Caco-2 (cell line): ENCODE measurements at regions of chr11 and their contacts with region 1.

Region 1: DNA sequence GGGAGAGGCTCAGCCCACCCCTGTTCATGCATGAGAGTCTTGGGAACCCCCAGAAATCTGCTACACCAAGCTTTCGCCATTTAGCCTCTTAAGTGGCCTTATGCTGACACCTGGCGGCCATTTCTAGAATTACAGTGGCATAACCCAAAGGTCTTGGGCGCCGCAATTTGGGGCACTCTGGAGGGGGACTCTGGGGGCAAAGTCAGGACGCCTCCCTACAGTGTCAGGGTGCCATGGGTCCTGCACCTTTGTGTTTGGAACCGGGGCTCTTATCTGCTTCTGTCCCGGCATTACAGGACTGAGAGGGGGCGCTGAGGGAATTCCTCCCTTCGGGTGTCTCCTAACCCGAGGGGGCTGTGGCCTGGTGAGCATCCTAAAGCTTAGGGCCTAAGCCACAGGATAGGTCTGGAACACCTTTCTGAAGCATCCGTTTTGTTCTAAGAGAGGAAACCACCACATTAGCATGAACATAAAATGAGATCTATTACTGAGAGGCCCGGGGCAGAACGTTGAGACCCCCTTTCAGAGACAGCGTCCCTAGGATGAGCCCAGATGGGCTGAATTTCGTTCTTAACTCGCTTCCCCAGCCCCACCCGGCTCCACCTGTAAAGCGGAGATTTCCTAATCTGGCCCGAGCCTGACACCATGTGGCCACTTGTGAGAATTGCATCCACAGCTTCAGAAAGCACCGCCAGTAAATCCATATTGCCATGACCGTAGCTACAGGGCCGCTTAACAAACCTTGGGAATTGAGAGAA is 9.3 kb downstream of the INS start:
- DNase-seq: peak; percentile 90 to 92
- H3K4me3 ChIP-seq: no peak overlapping the region
- H3K4me3 Mint-ChIP-seq: peak overlapping the region; percentile 33
- H3K27ac Mint-ChIP-seq: peak overlapping the region; percentile 65
- H3K4me1 ChIP-seq: no peaks in the 10 kb centered on the region; the same call in 1 of the 2 replicates
- H3K4me1 Mint-ChIP-seq: no peaks in the 10 kb centered on the region
- H3K27me3 ChIP-seq: no peaks in the 10 kb centered on the region
- H3K27me3 Mint-ChIP-seq: no peaks in the 10 kb centered on the region
- CTCF ChIP-seq: peak; percentile 93 to 97

Region 2: GRCh38 chr11:1598816-1599215 is 552.9 kb before region 1 on chr11:
- CTCF ChIA-PET with region 1: interaction called, 13 read pairs
- POLR2A ChIA-PET with region 1: no interaction called
- intact Hi-C with region 1: no loop called
- DNase-seq: no peak
- H3K4me3 ChIP-seq: no peak overlapping the region
- H3K4me3 Mint-ChIP-seq: no peak overlapping the region
- H3K27ac Mint-ChIP-seq: no peak overlapping the region
- H3K4me1 ChIP-seq: no peaks in the 10 kb centered on the region
- H3K4me1 Mint-ChIP-seq: no peaks in the 10 kb centered on the region
- H3K27me3 ChIP-seq: no peaks in the 10 kb centered on the region; the same call in 1 of the 2 replicates
- H3K27me3 Mint-ChIP-seq: peaks cover 22% of the 10 kb centered on the region
- CTCF ChIP-seq: no peak

Region 3: DNA sequence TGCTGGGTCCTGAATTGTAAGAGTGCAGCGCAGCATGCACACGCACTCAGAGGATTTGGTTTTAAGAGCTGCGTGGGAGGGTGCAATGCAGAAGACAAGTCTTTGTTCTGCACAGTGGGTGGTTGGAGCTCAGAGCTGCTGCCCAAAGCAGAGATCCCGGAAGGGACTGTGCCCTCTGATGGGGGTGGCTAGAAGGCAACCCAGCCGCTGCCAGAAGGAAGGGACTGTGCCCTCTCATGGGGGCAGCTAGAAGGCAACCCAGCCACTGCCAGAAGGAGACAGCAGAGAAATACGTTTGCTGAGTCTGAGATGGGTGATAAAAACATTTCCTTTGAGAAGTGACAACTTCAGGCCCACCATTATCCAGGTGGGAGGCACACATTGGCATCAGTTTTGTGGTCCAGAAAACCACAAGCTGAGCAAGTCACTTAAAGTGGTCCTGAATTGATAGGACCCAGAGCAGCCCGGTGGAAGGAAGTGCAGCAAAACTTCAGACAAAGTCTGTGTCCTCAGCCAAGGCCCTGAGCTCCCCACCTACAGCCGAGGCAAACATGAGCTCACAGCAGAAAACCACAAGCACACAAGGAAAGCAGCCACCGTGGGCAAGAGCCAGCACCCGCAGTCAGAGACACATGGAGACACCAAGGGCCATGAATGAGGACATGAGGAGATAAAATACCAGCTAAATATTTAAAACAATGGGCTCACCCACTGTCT is 450.4 kb before region 1 on chr11:
- CTCF ChIA-PET with region 1: no interaction called
- POLR2A ChIA-PET with region 1: no interaction called
- intact Hi-C with region 1: no loop called
- DNase-seq: no peak
- H3K4me3 ChIP-seq: no peak overlapping the region
- H3K4me3 Mint-ChIP-seq: no peak overlapping the region
- H3K27ac Mint-ChIP-seq: no peak overlapping the region
- H3K4me1 ChIP-seq: peaks cover 9% of the 10 kb centered on the region; the same call in 1 of the 2 replicates
- H3K4me1 Mint-ChIP-seq: peaks cover 15% of the 10 kb centered on the region
- H3K27me3 ChIP-seq: no peaks in the 10 kb centered on the region
- H3K27me3 Mint-ChIP-seq: no peaks in the 10 kb centered on the region
- CTCF ChIP-seq: no peak

Region 4: GRCh38 chr11:1757861-1758610 is 393.6 kb before region 1 on chr11:
- CTCF ChIA-PET with region 1: no interaction called
- POLR2A ChIA-PET with region 1: no interaction called
- intact Hi-C with region 1: no loop called
- DNase-seq: no peak
- H3K4me3 ChIP-seq: no peak overlapping the region
- H3K4me3 Mint-ChIP-seq: no peak overlapping the region
- H3K27ac Mint-ChIP-seq: no peak overlapping the region
- H3K4me1 ChIP-seq: peaks cover 7% of the 10 kb centered on the region
- H3K4me1 Mint-ChIP-seq: peaks cover 7% of the 10 kb centered on the region
- H3K27me3 ChIP-seq: no peaks in the 10 kb centered on the region
- H3K27me3 Mint-ChIP-seq: no peaks in the 10 kb centered on the region
- CTCF ChIP-seq: no peak

Region 5: DNA sequence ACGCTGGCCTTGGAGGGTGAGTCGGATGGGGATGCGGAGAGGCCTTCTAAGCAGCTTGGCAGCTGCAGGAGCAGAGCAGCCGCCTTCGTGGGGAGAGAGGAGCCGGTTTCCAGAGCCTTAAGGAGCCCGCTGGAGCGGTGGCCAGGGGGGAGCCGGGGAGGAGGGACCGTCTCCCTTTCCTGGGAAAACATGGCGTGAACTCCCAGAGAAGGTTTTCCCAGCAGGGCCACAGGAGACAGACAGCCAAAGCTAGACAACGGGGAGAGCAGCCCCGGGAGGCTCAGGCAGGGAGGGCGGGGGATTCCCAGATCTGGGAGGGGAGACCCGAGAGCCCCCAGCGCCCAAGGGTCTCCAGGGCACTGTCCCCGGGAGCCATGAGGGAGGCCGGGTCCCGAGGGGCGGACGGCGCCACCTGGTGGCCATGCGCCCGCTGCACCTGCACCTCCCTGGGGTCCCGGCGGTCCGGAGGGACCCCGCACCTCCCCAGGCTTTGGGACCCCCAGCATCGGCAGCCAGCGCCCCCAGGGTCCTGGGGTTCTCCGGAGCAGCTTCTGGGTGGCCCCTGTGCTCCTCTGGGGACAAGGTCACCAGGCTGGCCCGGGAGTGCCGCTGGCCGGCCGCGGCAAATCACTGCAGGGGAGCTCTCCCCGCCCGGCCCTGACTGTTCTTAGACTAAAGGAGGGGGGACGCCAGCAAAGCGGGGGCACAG is 319.3 kb before region 1 on chr11:
- CTCF ChIA-PET with region 1: interaction called, 38 read pairs
- POLR2A ChIA-PET with region 1: no interaction called
- intact Hi-C with region 1: loop called (anchors 2 kb)
- DNase-seq: peak in 1 of 2 experiments; percentile 70
- H3K4me3 ChIP-seq: no peak overlapping the region
- H3K4me3 Mint-ChIP-seq: peak overlapping the region; percentile 33
- H3K27ac Mint-ChIP-seq: peak overlapping the region; percentile 98
- H3K4me1 ChIP-seq: peaks cover 78% of the 10 kb centered on the region
- H3K4me1 Mint-ChIP-seq: peaks cover 50% of the 10 kb centered on the region
- H3K27me3 ChIP-seq: no peaks in the 10 kb centered on the region
- H3K27me3 Mint-ChIP-seq: no peaks in the 10 kb centered on the region
- CTCF ChIP-seq: peak; percentile 80 to 95

Region 6: DNA sequence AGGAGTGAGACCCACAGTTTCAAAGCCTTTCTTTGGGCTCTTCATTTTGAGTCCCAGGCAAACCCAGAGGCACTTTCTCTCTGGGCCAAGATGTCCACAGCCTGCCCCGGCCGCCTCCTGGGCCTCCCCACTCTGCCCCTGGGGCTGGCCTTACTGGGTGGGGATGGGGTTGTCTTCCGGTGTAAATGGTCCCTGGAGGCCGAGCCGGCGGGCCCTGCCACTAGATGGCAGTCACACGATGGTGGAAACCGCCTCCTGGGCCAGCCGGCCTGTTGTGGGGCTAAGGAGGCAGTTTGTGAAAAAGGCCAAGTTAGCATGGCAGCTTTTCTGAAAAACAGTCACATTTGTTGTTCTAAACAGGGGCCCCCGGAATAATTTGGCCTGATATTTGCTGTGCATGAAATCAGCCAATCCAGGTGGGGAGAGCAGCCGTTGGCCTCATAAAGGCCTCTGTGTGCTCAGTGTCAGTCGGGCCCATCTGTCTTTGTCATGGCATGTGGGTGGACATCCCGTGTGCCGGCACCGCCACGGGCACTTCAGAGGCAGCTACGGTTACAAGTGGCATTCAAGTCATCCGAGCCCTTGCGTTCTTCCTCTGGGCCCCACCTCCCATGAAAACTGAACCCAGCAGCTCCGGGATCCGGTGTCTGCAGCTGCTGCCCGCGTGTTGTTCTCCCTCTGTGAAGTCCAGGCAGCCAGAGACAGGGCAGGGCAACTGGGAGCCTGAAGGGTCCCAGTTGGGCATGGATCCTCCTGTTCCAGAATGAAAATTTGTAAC is 198.0 kb before region 1 on chr11:
- CTCF ChIA-PET with region 1: interaction called, 36 read pairs
- POLR2A ChIA-PET with region 1: no interaction called
- intact Hi-C with region 1: no loop called
- DNase-seq: no peak
- H3K4me3 ChIP-seq: no peak overlapping the region
- H3K4me3 Mint-ChIP-seq: no peak overlapping the region
- H3K27ac Mint-ChIP-seq: no peak overlapping the region
- H3K4me1 ChIP-seq: no peaks in the 10 kb centered on the region
- H3K4me1 Mint-ChIP-seq: no peaks in the 10 kb centered on the region
- H3K27me3 ChIP-seq: no peaks in the 10 kb centered on the region
- H3K27me3 Mint-ChIP-seq: no peaks in the 10 kb centered on the region
- CTCF ChIP-seq: no peak

Region 7: DNA sequence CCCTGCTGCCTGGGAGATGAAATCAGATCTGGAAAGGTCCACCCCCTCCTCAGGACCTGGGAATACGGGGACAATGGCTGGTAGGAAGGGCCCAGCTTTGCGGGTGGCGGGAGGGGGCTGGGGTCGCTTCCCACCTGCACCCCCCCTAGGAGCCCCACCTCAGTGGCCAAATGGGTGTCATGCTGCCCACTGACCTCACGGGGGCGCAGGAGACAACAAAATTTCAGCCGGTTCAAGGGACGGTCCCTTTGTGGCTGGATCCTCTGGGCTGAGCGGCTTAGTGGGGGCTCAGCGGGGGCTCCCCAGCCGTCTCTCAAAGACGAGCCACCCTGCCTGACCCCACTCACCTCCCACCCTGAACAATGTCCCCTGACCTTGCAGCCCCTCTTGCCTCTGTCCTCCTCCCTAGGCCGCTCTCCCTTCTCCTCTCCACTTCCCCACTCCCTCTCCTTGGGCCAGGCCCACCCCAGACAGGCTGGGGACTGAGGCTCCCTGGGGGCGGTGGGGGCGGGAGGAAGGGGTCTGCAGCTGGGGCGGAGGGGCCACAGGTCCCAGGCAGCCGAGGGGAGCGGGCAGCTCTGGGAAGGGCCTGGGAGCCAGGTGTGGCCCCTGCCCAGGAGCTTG is 114.7 kb before region 1 on chr11:
- CTCF ChIA-PET with region 1: interaction called, 157 read pairs
- POLR2A ChIA-PET with region 1: no interaction called
- intact Hi-C with region 1: no loop called
- DNase-seq: no peak
- H3K4me3 ChIP-seq: no peak overlapping the region
- H3K4me3 Mint-ChIP-seq: no peak overlapping the region
- H3K27ac Mint-ChIP-seq: no peak overlapping the region
- H3K4me1 ChIP-seq: no peaks in the 10 kb centered on the region
- H3K4me1 Mint-ChIP-seq: no peaks in the 10 kb centered on the region
- H3K27me3 ChIP-seq: no peaks in the 10 kb centered on the region
- H3K27me3 Mint-ChIP-seq: no peaks in the 10 kb centered on the region
- CTCF ChIP-seq: no peak

Region 8: GRCh38 chr11:2178906-2179494 is 27.3 kb after region 1 on chr11:
- CTCF ChIA-PET with region 1: interaction called, 55 read pairs
- POLR2A ChIA-PET with region 1: no interaction called
- intact Hi-C with region 1: no loop called
- DNase-seq: peak; percentile 57 to 79
- H3K4me3 ChIP-seq: no peak overlapping the region
- H3K4me3 Mint-ChIP-seq: no peak overlapping the region
- H3K27ac Mint-ChIP-seq: peak overlapping the region; percentile 82
- H3K4me1 ChIP-seq: peaks cover 31% of the 10 kb centered on the region
- H3K4me1 Mint-ChIP-seq: peaks cover 13% of the 10 kb centered on the region
- H3K27me3 ChIP-seq: no peaks in the 10 kb centered on the region
- H3K27me3 Mint-ChIP-seq: no peaks in the 10 kb centered on the region
- CTCF ChIP-seq: no peak

Region 9: GRCh38 chr11:2214527-2215229 is 63.0 kb after region 1 on chr11:
- CTCF ChIA-PET with region 1: interaction called, 37 read pairs
- POLR2A ChIA-PET with region 1: no interaction called
- intact Hi-C with region 1: no loop called
- DNase-seq: peak in 1 of 2 experiments; percentile 73
- H3K4me3 ChIP-seq: no peak overlapping the region
- H3K4me3 Mint-ChIP-seq: no peak overlapping the region
- H3K27ac Mint-ChIP-seq: peak overlapping the region; percentile 75
- H3K4me1 ChIP-seq: peaks cover 86% of the 10 kb centered on the region
- H3K4me1 Mint-ChIP-seq: peaks cover 39% of the 10 kb centered on the region
- H3K27me3 ChIP-seq: no peaks in the 10 kb centered on the region
- H3K27me3 Mint-ChIP-seq: no peaks in the 10 kb centered on the region
- CTCF ChIP-seq: no peak

Region 10: DNA sequence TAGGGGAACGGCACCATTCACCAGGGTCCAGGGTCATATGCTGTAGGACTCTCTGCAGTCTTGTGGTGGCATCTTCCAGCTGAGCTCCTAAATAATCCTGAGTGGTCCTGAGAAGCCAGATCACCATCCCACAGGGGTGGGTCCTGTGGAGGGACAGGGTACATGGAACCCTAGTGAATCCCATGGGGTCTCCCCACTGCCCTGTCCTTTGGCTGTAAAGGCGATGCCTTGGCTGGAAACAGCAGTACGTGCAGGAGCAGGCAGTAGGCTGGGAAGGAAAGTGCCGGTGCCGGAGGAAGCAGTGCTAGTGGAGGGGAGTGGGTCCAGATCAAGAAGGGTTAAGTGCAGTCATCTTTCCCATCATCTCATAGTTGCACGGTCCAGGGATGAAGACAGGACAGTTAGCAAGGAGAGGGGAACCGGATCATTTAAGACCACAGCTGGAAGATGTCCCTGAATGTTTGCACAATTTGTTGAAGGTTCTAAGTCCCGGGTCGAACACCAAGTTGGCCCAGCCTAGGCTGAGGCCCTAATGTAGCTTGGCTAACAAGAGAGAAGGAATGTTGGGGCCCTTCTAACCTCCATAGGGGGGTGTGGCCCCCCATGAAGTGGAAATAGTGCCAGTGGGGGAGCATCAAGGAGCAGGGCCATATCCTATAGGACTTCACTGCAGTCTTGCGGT is 168.3 kb after region 1 on chr11:
- CTCF ChIA-PET with region 1: no interaction called
- POLR2A ChIA-PET with region 1: no interaction called
- intact Hi-C with region 1: no loop called
- DNase-seq: no peak
- H3K4me3 ChIP-seq: no peak overlapping the region
- H3K4me3 Mint-ChIP-seq: no peak overlapping the region
- H3K27ac Mint-ChIP-seq: no peak overlapping the region
- H3K4me1 ChIP-seq: no peaks in the 10 kb centered on the region
- H3K4me1 Mint-ChIP-seq: no peaks in the 10 kb centered on the region
- H3K27me3 ChIP-seq: no peaks in the 10 kb centered on the region
- H3K27me3 Mint-ChIP-seq: no peaks in the 10 kb centered on the region
- CTCF ChIP-seq: no peak